ENCODE measurements at regions of chr2 and their contacts with region 1.

Region 1: DNA sequence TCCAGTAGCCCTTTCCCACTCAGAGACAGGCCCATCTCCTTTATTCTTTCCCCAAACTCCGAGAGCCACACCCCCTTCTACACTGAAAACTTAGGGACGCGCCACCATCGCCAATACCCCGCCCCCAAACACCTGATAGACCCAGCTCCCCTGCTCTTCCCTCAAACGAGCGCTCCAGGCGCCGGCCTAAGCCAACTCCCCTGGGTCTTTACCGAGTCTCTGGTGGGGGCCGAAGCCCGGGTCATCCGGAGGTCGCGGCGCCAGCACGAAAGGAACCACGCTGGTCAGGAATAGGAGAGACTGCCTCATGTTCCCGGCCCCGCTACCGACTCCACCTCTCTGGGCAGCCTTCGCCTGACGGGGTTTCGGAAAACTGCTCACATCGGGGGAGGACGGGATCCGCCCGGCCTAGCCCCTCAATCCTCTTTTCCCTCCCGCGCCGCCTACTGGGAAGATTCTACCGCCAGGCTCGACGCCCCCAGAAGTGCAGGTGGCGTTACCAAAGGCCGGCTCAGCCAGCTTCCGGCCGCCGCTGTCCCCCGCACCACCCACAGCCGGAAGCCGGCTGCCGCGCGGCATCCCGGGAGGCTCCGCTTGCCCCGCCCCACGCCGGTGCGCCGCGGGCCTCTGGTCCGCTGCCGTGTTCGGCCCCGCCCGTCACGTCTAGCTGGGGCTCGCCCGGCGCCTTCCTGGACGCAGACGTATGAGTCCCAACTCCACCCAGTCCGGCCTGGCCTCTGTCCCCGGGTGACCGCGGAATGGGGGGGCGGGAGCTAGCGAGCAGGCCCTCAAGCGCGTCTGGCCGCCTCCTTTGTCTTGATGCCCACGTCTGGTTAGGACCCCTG is at the start of gene ADAM17:
- DNase-seq: peak; percentile 91 to 97 (median 93)
- ATAC-seq: peak; percentile 94
- H3K4me3 ChIP-seq: peak within 1 kb of the TSS; percentile 79
- H3K27ac ChIP-seq: peak within 1 kb of the TSS; percentile 97
- H3K4me1 ChIP-seq: peaks cover 9 to 16% of the 10 kb centered on the region in 2 experiments; a peak in 4 of 5 replicates
- H3K27me3 ChIP-seq: no peaks in the 10 kb centered on the region
- CTCF ChIP-seq: peak; percentile 31 to 60 (median 41); a peak in 5 of 6 replicates
- EP300 ChIP-seq: peak; percentile 32; the same call in 1 of the 2 replicates
- POLR2A ChIP-seq: peak; percentile 93
- RAD21 ChIP-seq: 0 out of 4 replicates have a peak, but pooled peaks of 1 of the 2 experiments have one; percentile 6
- polyA plus RNA-seq, gene ADAM17: 5.8 to 7.8 TPM

Region 2: GRCh38 chr2:9423100-9423921 is 132.2 kb before region 1 on chr2 and contains the starts of genes CPSF3 and ITGB1BP1:
- CTCF ChIA-PET with region 1: no interaction called
- POLR2A ChIA-PET with region 1: no interaction called
- in situ Hi-C with region 1: no loop called
- intact Hi-C with region 1: loop called (anchors 5 kb)
- DNase-seq: peak; percentile 99
- ATAC-seq: peak; percentile 93
- H3K4me3 ChIP-seq: peak within 1 kb of the TSS; percentile 90
- H3K27ac ChIP-seq: peak within 1 kb of the TSS; percentile 90
- H3K4me1 ChIP-seq: peaks cover 19 to 29% of the 10 kb centered on the region in 2 experiments; a peak in 4 of 5 replicates
- H3K27me3 ChIP-seq: no peaks in the 10 kb centered on the region
- CTCF ChIP-seq: peak in 2 of 3 experiments; percentile 1 to 24; a peak in 1 of 6 replicates
- EP300 ChIP-seq: no peak
- POLR2A ChIP-seq: peak; percentile 87
- RAD21 ChIP-seq: 0 out of 4 replicates have a peak, but pooled peaks of 1 of the 2 experiments have one; percentile 2
- polyA plus RNA-seq, gene CPSF3: 98.4 to 151 TPM
- polyA plus RNA-seq, gene ITGB1BP1: 37.8 to 50.4 TPM

Region 3: DNA sequence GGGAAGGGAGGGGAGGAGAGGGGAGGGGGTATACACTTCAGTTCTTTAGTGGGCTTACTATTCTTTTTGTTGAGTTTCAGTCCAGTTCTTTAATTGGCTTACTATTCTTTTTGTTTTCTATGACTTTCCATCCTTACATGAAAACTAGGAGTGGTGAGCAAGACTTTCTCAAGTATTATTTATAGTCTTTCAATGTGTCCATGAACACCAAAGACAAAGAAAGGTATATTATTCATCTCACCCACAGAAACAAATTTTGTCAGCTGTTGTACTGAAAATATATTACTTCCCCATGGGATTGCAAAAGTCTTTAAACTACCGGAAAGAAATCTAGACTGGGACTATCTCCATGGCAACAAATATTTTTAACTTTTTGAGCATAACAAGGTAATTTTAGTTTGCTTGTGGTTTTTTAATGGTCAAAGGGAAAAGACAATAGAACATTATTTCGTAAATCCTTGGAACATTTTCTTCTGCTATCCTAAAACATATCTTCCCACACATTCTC is 17.5 kb before region 1 on chr2:
- CTCF ChIA-PET with region 1: no interaction called
- POLR2A ChIA-PET with region 1: interaction called, 10 read pairs
- in situ Hi-C with region 1: no loop called
- intact Hi-C with region 1: no loop called
- DNase-seq: no peak
- ATAC-seq: no peak
- H3K4me3 ChIP-seq: no peak overlapping the region
- H3K27ac ChIP-seq: no peak overlapping the region
- H3K4me1 ChIP-seq: no peaks in the 10 kb centered on the region
- H3K27me3 ChIP-seq: no peaks in the 10 kb centered on the region
- CTCF ChIP-seq: no peak
- EP300 ChIP-seq: no peak
- POLR2A ChIP-seq: no peak
- RAD21 ChIP-seq: no peak

Region 4: GRCh38 chr2:9545502-9545901 is 10.0 kb before region 1 on chr2:
- CTCF ChIA-PET with region 1: interaction called, 3 read pairs
- POLR2A ChIA-PET with region 1: interaction called, 10 read pairs
- in situ Hi-C with region 1: no loop called
- intact Hi-C with region 1: no loop called
- DNase-seq: no peak
- ATAC-seq: no peak
- H3K4me3 ChIP-seq: no peak overlapping the region
- H3K27ac ChIP-seq: no peak overlapping the region
- H3K4me1 ChIP-seq: peaks cover 5 to 10% of the 10 kb centered on the region in 2 experiments; a peak in 3 of 5 replicates
- H3K27me3 ChIP-seq: no peaks in the 10 kb centered on the region
- CTCF ChIP-seq: no peak
- EP300 ChIP-seq: no peak
- POLR2A ChIP-seq: no peak
- RAD21 ChIP-seq: no peak

Region 5: DNA sequence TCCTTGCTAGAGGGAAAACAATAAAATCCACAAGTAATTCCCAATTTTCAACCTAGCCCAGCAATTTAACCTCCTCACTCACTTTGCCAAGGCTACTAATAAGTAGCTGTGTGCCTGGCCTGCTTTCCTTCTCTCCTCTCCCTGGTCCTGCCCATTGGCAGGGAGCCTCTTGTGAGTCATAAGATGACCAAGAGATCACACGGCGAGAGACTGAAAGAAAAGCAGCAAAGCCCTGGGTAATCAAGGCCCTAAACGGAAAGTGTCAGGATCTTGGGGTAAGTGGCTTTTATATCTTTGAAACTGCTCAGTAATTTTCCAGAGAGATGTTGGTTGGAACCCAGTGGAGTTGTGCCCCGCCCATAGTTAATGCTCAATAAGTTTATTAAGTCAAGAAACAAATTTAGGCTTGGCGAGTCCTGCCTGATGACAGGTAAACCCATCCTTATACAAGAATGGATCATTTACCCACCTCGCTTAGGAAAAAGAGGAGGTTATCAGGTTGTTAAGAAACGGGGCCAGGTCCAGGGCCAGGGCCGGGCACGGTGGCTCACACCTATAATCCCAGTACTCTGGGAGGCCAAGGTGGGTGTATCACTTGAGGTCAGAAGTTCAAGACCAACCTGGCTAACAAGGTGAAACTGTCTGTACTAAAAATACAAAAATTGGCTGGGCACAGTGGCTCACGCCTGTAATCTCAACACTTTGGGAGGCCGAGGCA is 10.1 kb after region 1 on chr2:
- CTCF ChIA-PET with region 1: no interaction called
- POLR2A ChIA-PET with region 1: interaction called, 11 read pairs
- in situ Hi-C with region 1: no loop called
- intact Hi-C with region 1: no loop called
- DNase-seq: peak in 1 of 4 experiments; percentile 26
- ATAC-seq: peak; percentile 26; the same call in 2 of the 3 replicates
- H3K4me3 ChIP-seq: no peak overlapping the region
- H3K27ac ChIP-seq: no peak overlapping the region
- H3K4me1 ChIP-seq: peaks cover 0 to 4% of the 10 kb centered on the region in 2 experiments; a peak in 1 of 5 replicates
- H3K27me3 ChIP-seq: no peaks in the 10 kb centered on the region
- CTCF ChIP-seq: no peak
- EP300 ChIP-seq: no peak
- POLR2A ChIP-seq: no peak
- RAD21 ChIP-seq: no peak

Region 6: DNA sequence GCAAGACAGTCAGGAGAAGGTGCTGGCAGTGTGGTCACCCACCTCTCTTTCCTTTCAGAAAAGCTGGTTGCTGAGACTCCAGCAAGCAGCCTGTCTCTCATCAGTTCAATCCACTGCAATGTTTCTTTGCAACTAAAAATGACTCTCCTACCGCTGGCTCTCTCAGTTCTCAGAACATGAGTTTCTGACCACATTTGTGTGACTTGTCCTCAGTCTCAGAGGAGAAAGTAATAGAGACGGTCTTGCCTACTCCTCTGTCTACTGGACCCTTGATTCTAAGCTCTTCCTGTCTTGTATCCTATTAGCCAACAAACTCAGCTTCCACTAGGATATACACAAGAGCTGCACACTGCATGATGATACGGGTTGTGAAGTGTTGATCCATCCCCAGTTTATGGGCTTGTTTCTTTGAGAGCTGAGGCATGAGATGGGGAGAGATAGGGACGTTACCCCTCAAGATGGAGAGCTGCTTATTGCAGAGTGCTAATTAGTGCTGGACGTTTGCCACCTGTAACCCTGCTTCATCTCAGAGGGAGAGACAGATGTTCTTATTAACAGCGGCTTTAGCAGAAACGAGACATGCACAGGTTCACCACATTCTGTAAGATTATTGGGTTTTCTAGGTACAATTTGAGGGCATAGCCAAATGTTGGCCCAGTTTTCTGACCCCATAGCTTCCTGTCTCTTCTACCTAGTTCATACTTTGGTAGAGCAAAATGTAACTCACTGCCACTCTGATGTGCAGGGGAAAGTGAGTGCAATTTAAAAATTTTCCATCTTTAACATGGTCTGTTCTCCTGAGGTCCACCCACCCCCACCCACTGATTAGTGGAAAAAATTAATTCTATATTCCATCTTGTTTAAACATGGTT is 107.7 kb after region 1 on chr2:
- CTCF ChIA-PET with region 1: no interaction called
- POLR2A ChIA-PET with region 1: no interaction called
- in situ Hi-C with region 1: no loop called
- intact Hi-C with region 1: no loop called
- DNase-seq: no peak
- ATAC-seq: no peak; the same call in 2 of the 3 replicates
- H3K4me3 ChIP-seq: no peak overlapping the region
- H3K27ac ChIP-seq: no peak overlapping the region
- H3K4me1 ChIP-seq: no peaks in the 10 kb centered on the region; a peak in 1 of 5 replicates
- H3K27me3 ChIP-seq: peaks cover 11 to 17% of the 10 kb centered on the region in 2 experiments; a peak in 3 of 5 replicates
- CTCF ChIP-seq: no peak
- EP300 ChIP-seq: no peak
- POLR2A ChIP-seq: no peak
- RAD21 ChIP-seq: no peak

Region 7: DNA sequence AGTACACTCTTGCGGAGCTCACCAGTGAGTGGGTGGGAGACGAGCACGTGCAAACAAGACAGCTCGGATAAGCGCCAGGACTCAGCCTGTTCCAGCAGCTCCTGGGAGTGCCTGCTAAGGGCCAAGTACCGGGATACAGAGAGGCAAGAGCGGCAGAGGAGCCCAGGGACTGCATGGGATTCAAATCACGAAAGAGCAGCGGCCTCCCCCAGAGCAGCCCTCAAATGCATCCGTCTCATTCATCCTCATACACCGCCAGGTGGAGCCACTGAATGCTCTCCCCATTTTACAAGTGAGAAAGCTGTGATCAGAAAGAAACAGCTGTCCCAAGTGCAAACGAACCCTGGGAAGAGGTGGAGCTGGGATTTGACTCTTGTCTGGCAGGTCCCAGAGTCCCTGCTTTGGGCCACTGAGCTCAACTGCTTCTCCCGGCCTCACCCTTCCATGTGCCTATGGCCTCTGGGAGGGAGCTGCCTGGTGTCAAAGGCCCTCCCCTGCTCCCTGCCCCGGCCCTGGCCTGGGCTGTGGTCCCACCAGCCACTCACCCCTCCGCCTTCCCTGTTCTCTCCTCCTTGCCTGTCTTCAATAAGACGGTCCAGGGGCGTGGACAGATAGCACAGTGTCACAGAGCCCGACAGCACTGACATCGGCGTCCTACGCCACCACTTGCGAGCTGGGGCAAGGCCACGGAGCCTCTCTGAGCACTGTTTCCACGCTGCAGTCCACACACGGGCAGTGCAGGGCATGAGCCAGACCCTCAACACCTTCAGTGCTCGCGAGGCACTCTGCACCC is 215.0 kb after region 1 on chr2:
- CTCF ChIA-PET with region 1: no interaction called
- POLR2A ChIA-PET with region 1: interaction called, 8 read pairs
- in situ Hi-C with region 1: no loop called
- intact Hi-C with region 1: loop called (anchors 5 kb)
- DNase-seq: peak; percentile 76 to 83 (median 78)
- ATAC-seq: peak; percentile 86
- H3K4me3 ChIP-seq: no peak overlapping the region
- H3K27ac ChIP-seq: no peak overlapping the region
- H3K4me1 ChIP-seq: peaks cover 20 to 51% of the 10 kb centered on the region in 2 experiments; a peak in 4 of 5 replicates
- H3K27me3 ChIP-seq: no peaks in the 10 kb centered on the region; a peak in 1 of 5 replicates
- CTCF ChIP-seq: peak; percentile 80 to 83 (median 82)
- EP300 ChIP-seq: no peak
- POLR2A ChIP-seq: no peak
- RAD21 ChIP-seq: peak; percentile 50 to 68

Measured in K562 (cell line).